Activated naive CD4-positive, alpha-beta T cell treated with anti-CD3 and anti-CD28 coated beads for 36 hours (primary cell): ENCODE measurements at regions of chr13 and their contacts with region 1.

Region 1: GRCh38 chr13:50170447-50171037 is 155.3 kb downstream of the KCNRG start:
- DNase-seq: no peak
- H3K4me3 Mint-ChIP-seq: no peak overlapping the region
- H3K27ac Mint-ChIP-seq: no peak overlapping the region
- H3K4me1 Mint-ChIP-seq: peaks cover 18% of the 10 kb centered on the region
- H3K27me3 Mint-ChIP-seq: peaks cover 6% of the 10 kb centered on the region

Region 2: GRCh38 chr13:50106559-50106958 is 64.0 kb before region 1 on chr13:
- CTCF ChIA-PET with region 1: no interaction called
- intact Hi-C with region 1: loop called (anchors 2 kb)
- DNase-seq: no peak
- H3K4me3 Mint-ChIP-seq: no peak overlapping the region
- H3K27ac Mint-ChIP-seq: peak overlapping the region; percentile 69
- H3K4me1 Mint-ChIP-seq: peaks cover 36% of the 10 kb centered on the region
- H3K27me3 Mint-ChIP-seq: no peaks in the 10 kb centered on the region

Region 3: GRCh38 chr13:50152655-50153309 is 17.8 kb before region 1 on chr13:
- CTCF ChIA-PET with region 1: interaction called, 5 read pairs
- intact Hi-C with region 1: loop called (anchors 2 kb)
- DNase-seq: no peak
- H3K4me3 Mint-ChIP-seq: peak overlapping the region; percentile 17
- H3K27ac Mint-ChIP-seq: no peak overlapping the region
- H3K4me1 Mint-ChIP-seq: peaks cover 14% of the 10 kb centered on the region
- H3K27me3 Mint-ChIP-seq: peaks cover 7% of the 10 kb centered on the region

Region 4: DNA sequence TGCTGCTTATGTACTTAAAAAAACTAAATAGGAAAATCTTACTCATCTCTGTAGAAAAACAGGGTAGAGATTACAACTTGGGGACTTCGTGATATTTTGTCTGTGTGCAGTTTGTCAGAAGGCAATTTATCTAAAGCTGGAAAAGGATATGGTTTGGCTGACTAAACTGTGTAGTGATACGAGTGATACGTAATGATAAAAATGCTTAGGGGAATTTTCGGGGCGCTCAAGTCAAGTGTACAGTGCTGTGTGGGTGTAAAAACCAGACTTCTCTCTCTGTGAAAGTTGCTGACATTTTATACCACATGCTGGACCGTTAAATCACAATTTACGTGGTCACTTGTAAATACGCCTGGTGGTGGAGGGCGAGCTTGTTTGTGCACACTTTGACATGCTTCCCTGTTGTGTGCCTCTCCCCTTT is 66.4 kb after region 1 on chr13:
- CTCF ChIA-PET with region 1: interaction called, 5 read pairs
- intact Hi-C with region 1: loop called (anchors 1 kb)
- DNase-seq: peak; percentile 62
- H3K4me3 Mint-ChIP-seq: no peak overlapping the region
- H3K27ac Mint-ChIP-seq: peak overlapping the region; percentile 61
- H3K4me1 Mint-ChIP-seq: peaks cover 48% of the 10 kb centered on the region
- H3K27me3 Mint-ChIP-seq: peaks cover 12% of the 10 kb centered on the region

Region 5: DNA sequence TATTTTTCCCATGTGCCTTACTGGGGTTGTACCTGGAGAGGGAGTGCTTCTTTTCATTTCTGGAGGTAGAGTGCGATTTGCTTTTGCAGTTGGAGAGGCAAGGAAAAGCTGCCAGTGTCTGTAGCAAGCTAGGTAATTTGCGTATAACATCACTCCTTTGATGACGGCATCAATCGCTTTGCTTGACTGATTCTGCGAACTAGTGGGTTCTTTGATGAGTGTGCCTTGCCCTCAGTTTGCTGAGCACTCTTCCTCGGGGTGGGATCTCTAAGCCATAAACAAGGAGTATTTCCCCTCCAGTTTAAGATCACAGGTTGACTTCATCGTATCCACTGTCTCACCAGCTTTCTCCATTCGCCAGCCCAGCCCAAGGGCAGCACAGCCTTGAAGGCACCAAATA is 189.2 kb after region 1 on chr13:
- CTCF ChIA-PET with region 1: no interaction called
- intact Hi-C with region 1: loop called (anchors 1 kb)
- DNase-seq: peak; percentile 31
- H3K4me3 Mint-ChIP-seq: no peak overlapping the region
- H3K27ac Mint-ChIP-seq: no peak overlapping the region
- H3K4me1 Mint-ChIP-seq: peaks cover 39% of the 10 kb centered on the region
- H3K27me3 Mint-ChIP-seq: peaks cover 5% of the 10 kb centered on the region

Region 6: GRCh38 chr13:50529154-50529882 is 358.8 kb after region 1 on chr13:
- CTCF ChIA-PET with region 1: no interaction called
- intact Hi-C with region 1: loop called (anchors 10 kb)
- DNase-seq: peak; percentile 49
- H3K4me3 Mint-ChIP-seq: no peak overlapping the region
- H3K27ac Mint-ChIP-seq: no peak overlapping the region
- H3K4me1 Mint-ChIP-seq: peaks cover 18% of the 10 kb centered on the region
- H3K27me3 Mint-ChIP-seq: peaks cover 13% of the 10 kb centered on the region